Ascending aorta (tissue), 2 donors: ENCODE measurements at regions of chr14 and their contacts with region 1.

Region 1: DNA sequence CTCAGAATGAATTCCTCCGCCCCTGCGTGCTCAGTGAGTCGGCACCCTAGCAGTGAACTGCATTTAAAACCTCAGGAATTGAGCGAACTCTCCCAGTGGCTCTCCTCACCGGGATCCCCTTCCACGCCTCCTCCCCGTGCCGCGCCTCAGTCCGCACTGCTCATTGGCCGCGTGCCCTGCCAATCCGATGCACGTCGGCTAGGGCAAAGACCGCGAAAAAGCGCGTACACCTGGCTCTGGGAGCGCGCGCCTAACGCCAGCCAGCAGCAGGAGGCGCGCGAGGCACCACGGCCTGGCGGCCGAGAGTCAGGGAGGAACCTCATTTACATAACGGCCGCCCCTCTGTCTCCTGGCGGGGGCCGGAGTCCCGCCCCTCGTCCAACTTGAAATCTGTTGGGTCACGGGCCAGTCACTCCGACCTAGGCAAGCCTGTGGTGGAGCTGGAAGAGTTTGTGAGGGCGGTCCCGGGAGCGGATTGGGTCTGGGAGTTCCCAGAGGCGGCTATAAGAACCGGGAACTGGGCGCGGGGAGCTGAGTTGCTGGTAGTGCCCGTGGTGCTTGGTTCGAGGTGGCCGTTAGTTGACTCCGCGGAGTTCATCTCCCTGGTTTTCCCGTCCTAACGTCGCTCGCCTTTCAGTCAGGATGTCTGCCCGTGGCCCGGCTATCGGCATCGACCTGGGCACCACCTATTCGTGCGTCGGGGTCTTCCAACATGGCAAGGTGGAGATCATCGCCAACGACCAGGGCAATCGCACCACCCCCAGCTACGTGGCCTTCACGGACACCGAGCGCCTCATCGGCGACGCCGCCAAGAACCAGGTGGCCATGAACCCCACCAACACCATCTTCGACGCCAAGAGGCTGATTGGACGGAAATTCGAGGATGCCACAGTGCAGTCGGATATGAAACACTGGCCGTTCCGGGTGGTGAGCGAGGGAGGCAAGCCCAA is at the start of gene HSPA2:
- DNase-seq: peak; percentile 99 to 100
- H3K4me3 ChIP-seq: peak within 1 kb of the TSS; percentile 69 to 74
- H3K27ac ChIP-seq: peak within 1 kb of the TSS; percentile 87 to 93
- H3K4me1 ChIP-seq: peaks cover 0 to 10% of the 10 kb centered on the region in 2 donors
- H3K27me3 ChIP-seq: no peaks in the 10 kb centered on the region
- CTCF ChIP-seq: peak; percentile 80 to 87 (median 86)
- total RNA-seq, gene HSPA2: 22.9 TPM

Region 2: GRCh38 chr14:64387694-64388532 is 152.6 kb before region 1 on chr14 and contains the start of gene MTHFD1:
- intact Hi-C with region 1: loop called (anchors 2 kb)
- DNase-seq: peak; percentile 98 to 100
- H3K4me3 ChIP-seq: peak within 1 kb of the TSS; percentile 69 to 78
- H3K27ac ChIP-seq: peak within 1 kb of the TSS; percentile 86 to 88
- H3K4me1 ChIP-seq: peaks cover 5 to 16% of the 10 kb centered on the region in 2 donors
- H3K27me3 ChIP-seq: no peaks in the 10 kb centered on the region
- CTCF ChIP-seq: no peak
- total RNA-seq, gene MTHFD1: 7.2 TPM

Region 3: GRCh38 chr14:64496764-64497163 is 43.7 kb before region 1 on chr14:
- intact Hi-C with region 1: no loop called
- DNase-seq: no peak
- H3K4me3 ChIP-seq: no peak overlapping the region
- H3K27ac ChIP-seq: no peak overlapping the region
- H3K4me1 ChIP-seq: peaks cover 6 to 18% of the 10 kb centered on the region in 2 donors
- H3K27me3 ChIP-seq: no peaks in the 10 kb centered on the region
- CTCF ChIP-seq: no peak

Region 4: DNA sequence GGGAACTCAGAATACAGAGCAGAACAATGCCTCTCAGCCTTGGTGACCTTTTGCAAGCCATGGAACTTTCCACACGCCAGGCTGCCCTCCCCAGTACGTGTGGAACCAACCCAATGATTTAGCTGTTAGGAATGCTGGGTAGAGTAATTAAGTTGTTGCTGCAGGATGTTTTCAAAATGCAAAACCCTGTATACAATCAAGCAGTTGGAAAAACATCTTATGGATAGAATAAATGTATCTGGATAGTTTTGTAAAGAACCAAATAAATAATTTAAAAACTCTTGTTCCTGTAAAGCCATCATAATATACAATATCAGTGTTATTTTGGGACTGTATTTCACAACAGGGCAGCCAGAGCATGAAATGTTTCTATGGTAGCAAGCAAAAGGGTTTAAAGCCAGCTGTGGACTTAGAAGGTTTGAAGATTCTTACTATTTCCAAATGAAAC is 28.7 kb after region 1 on chr14:
- intact Hi-C with region 1: loop called (anchors 1 kb)
- DNase-seq: peak; percentile 12 to 86
- H3K4me3 ChIP-seq: peak overlapping the region in 1 of 2 donors; percentile 6
- H3K27ac ChIP-seq: peak overlapping the region; percentile 71 to 72
- H3K4me1 ChIP-seq: peaks cover 6 to 38% of the 10 kb centered on the region in 2 donors
- H3K27me3 ChIP-seq: no peaks in the 10 kb centered on the region
- CTCF ChIP-seq: no peak

Region 5: GRCh38 chr14:64704143-64704742 is 163.8 kb after region 1 on chr14 and contains the start of gene PLEKHG3:
- intact Hi-C with region 1: loop called (anchors 2 kb)
- DNase-seq: peak in 1 of 2 donors; percentile 87
- H3K4me3 ChIP-seq: peak within 1 kb of the TSS; percentile 74 to 90
- H3K27ac ChIP-seq: peak within 1 kb of the TSS; percentile 88 to 95
- H3K4me1 ChIP-seq: peaks cover 7 to 35% of the 10 kb centered on the region in 2 donors
- H3K27me3 ChIP-seq: no peaks in the 10 kb centered on the region
- CTCF ChIP-seq: no peak
- total RNA-seq, gene PLEKHG3: 134 TPM

Region 6: DNA sequence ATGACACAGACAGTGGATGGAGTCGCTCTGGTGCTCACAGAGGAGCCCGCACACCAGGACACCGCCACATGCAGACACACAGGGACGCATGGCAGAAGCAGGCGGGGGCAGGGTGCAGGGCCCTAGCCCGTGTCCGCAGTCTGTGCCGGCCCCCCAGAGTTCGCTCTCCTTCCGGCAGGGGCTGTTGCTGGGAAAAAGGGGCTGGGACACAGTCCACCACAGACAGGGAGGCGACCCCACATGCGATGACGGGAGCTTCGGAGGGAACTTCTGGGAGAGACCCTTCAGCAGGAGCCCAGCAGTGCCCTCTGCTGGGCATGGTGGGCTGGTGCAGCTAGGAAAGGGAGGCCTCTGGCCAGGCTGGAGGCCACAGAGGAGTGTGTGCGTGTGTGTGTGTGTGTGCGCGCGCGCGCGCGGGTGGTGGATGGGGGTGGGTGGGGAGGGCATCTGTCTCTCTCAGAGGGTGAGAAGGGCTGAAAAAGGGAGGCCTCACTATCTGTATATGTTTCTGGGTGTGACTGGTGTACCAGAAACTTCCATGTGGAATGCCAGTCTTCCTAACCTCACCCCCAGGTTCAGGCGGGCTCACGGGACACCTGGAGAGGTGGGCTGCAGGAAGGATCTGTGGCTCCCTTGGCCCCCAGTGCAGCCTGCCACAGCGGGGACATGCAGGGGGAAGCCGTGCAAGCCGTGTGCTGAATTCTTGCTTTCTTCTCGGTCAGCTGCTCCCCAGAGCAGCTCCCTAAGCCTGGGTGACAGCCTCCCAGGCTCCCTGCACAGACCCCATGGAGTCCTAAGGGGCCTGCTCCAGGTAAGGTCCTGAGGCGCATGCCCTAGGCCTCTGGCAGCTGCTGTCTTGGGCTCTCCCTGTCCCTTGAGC is 224.4 kb after region 1 on chr14:
- intact Hi-C with region 1: loop called (anchors 1 kb)
- DNase-seq: peak in 1 of 2 donors; percentile 89
- H3K4me3 ChIP-seq: peak overlapping the region; percentile 27 to 57
- H3K27ac ChIP-seq: peak overlapping the region; percentile 79 to 87
- H3K4me1 ChIP-seq: peaks cover 16 to 30% of the 10 kb centered on the region in 2 donors
- H3K27me3 ChIP-seq: no peaks in the 10 kb centered on the region
- CTCF ChIP-seq: peak; percentile 94 to 96 (median 95)